ENCODE measurements at regions of chr3 and their contacts with region 1.

Region 1: DNA sequence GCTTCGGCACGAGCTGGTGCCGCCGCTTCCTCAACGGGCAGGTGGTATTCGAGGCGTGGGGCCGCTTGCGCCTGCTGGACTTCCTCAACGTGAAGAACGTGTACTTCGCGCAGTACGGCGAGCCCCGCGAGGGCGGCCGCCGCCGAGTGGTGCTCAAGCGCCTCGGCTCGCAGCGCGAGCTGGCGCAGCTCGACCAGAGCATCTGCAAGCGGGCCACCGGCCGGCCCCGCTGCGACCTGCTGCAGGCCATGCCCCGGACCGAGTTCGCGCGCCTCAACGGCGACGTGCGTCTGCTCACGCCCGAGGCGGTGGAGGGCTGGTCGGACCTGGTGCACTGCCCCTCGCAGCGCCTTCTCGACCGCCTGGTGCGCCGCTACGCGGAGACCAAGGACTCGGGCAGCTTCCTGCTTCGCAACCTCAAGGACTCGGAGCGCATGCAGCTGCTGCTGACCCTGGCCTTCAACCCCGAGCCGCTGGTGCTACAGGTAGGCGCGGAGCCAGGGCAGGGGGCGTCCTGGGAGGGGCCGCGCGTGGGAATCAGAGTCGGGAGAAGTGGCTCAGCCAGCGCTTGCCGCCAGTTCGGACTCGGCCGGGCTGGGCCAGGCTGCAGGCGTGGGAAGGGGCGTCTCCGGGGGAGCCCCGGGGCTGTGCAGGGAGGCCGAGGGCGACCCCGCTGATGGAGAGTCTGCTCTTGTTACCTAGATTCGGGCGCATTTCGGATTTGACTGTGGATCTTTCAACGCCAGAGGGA is 1.1 kb downstream of the DIPK2A start:
- DNase-seq: peak; percentile 78
- ATAC-seq: peak; percentile 11
- H3K4me3 Mint-ChIP-seq: peak overlapping the region; percentile 96
- H3K27ac Mint-ChIP-seq: peak overlapping the region; percentile 87
- H3K4me1 Mint-ChIP-seq: peaks cover 29% of the 10 kb centered on the region
- H3K27me3 Mint-ChIP-seq: peaks cover 4% of the 10 kb centered on the region

Region 2: GRCh38 chr3:142578327-142579223 is 1394.1 kb before region 1 on chr3 and contains the start of gene ATR:
- CTCF ChIA-PET with region 1: no interaction called
- POLR2A ChIA-PET with region 1: no interaction called
- intact Hi-C with region 1: loop called in 1 of 2 experiments (anchors 5 kb)
- DNase-seq: peak; percentile 98
- ATAC-seq: peak; percentile 96
- H3K4me3 Mint-ChIP-seq: peak within 1 kb of the TSS; percentile 97
- H3K27ac Mint-ChIP-seq: peak within 1 kb of the TSS; percentile 99
- H3K4me1 Mint-ChIP-seq: peaks cover 43% of the 10 kb centered on the region
- H3K27me3 Mint-ChIP-seq: no peaks in the 10 kb centered on the region
- total RNA-seq, gene ATR: 36.1 to 39.9 TPM

Region 3: DNA sequence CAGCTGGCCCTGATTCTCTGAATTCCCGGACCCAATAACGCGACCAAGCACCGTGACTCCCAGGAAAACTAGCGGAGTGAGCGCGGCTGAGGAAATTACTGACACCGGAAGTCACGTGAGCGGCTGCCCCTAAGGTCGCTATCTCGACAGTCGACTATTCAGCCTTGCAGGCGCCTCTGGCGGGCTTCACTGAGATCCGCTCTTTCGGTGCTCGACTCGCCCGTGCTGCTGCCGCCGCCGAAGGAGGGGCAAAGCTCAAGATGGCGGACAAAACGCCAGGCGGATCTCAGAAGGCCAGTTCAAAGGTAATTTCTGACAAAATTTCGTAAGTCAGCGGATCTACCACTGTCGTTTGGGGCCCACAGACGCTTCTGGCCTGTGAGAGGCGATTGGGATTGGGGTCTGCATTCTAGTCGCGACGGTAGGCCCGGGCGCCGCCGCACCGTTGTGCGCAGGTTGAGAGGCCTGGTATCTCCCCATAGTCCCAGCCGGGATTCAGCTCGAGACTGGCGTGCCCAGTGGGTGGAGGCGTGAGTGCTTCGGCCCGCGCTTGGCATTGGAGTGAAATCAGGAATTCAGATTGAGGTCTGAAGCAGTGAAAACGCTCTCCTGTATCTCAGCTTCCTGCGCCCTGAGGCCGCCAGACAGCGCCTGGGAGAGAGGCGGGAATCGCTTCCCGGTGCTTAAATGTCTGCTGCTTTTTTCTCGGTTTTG is 971.2 kb before region 1 on chr3 and contains the start of gene U2SURP:
- CTCF ChIA-PET with region 1: no interaction called
- POLR2A ChIA-PET with region 1: no interaction called
- intact Hi-C with region 1: loop called in 1 of 2 experiments (anchors 5 kb)
- DNase-seq: peak; percentile 96
- ATAC-seq: peak; percentile 86
- H3K4me3 Mint-ChIP-seq: peak within 1 kb of the TSS; percentile 91
- H3K27ac Mint-ChIP-seq: peak within 1 kb of the TSS; percentile 99
- H3K4me1 Mint-ChIP-seq: peaks cover 40% of the 10 kb centered on the region
- H3K27me3 Mint-ChIP-seq: no peaks in the 10 kb centered on the region
- total RNA-seq, gene U2SURP: 208 to 248 TPM

Region 4: GRCh38 chr3:143167969-143168854 is 804.5 kb before region 1 on chr3:
- CTCF ChIA-PET with region 1: no interaction called
- POLR2A ChIA-PET with region 1: interaction called, 4 read pairs
- intact Hi-C with region 1: loop called in 1 of 2 experiments (anchors 5 kb)
- DNase-seq: no peak
- ATAC-seq: no peak
- H3K4me3 Mint-ChIP-seq: no peak overlapping the region
- H3K27ac Mint-ChIP-seq: peak overlapping the region; percentile 34
- H3K4me1 Mint-ChIP-seq: peaks cover 86% of the 10 kb centered on the region
- H3K27me3 Mint-ChIP-seq: no peaks in the 10 kb centered on the region

Region 5: GRCh38 chr3:143831208-143831607 is 141.5 kb before region 1 on chr3:
- CTCF ChIA-PET with region 1: no interaction called
- POLR2A ChIA-PET with region 1: no interaction called
- intact Hi-C with region 1: loop called (anchors 5 kb)
- DNase-seq: no peak
- ATAC-seq: peak; percentile 44
- H3K4me3 Mint-ChIP-seq: no peak overlapping the region
- H3K27ac Mint-ChIP-seq: no peak overlapping the region
- H3K4me1 Mint-ChIP-seq: peaks cover 48% of the 10 kb centered on the region
- H3K27me3 Mint-ChIP-seq: no peaks in the 10 kb centered on the region

Region 6: GRCh38 chr3:144032531-144033239 is 60.0 kb after region 1 on chr3:
- CTCF ChIA-PET with region 1: interaction called, 6 read pairs
- POLR2A ChIA-PET with region 1: no interaction called
- intact Hi-C with region 1: loop called in 1 of 2 experiments (anchors 1 kb)
- DNase-seq: no peak
- ATAC-seq: peak; percentile 55
- H3K4me3 Mint-ChIP-seq: no peak overlapping the region
- H3K27ac Mint-ChIP-seq: no peak overlapping the region
- H3K4me1 Mint-ChIP-seq: peaks cover 9% of the 10 kb centered on the region
- H3K27me3 Mint-ChIP-seq: no peaks in the 10 kb centered on the region

Region 7: DNA sequence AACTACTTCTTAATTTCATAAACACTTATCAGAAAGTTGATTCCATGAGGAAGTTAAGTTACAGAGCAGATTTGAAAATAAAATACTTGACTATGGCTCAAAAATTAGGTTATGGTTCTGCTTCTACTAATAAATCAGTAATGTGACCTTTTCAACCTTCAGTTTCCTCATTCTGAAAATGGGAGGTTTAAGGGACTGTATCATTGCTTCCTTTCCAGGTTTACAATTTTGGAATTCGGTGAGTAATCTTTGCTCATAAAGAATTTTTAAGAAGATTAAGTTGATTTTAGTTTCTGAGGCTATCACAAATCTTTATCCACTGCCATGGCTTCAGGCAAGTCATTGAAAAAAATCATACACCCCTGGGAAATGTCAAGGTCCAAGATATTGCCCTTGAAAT is 1060.1 kb after region 1 on chr3:
- CTCF ChIA-PET with region 1: no interaction called
- POLR2A ChIA-PET with region 1: no interaction called
- intact Hi-C with region 1: no loop called
- DNase-seq: no peak
- ATAC-seq: no peak
- H3K4me3 Mint-ChIP-seq: no peak overlapping the region
- H3K27ac Mint-ChIP-seq: no peak overlapping the region
- H3K4me1 Mint-ChIP-seq: no peaks in the 10 kb centered on the region
- H3K27me3 Mint-ChIP-seq: no peaks in the 10 kb centered on the region

Measured in activated CD4-positive, alpha-beta T cell treated with anti-CD3 and anti-CD28 coated beads for 36 hours (primary cell).